ENCODE measurements at regions of chr3 and their contacts with region 1.

Region 1: DNA sequence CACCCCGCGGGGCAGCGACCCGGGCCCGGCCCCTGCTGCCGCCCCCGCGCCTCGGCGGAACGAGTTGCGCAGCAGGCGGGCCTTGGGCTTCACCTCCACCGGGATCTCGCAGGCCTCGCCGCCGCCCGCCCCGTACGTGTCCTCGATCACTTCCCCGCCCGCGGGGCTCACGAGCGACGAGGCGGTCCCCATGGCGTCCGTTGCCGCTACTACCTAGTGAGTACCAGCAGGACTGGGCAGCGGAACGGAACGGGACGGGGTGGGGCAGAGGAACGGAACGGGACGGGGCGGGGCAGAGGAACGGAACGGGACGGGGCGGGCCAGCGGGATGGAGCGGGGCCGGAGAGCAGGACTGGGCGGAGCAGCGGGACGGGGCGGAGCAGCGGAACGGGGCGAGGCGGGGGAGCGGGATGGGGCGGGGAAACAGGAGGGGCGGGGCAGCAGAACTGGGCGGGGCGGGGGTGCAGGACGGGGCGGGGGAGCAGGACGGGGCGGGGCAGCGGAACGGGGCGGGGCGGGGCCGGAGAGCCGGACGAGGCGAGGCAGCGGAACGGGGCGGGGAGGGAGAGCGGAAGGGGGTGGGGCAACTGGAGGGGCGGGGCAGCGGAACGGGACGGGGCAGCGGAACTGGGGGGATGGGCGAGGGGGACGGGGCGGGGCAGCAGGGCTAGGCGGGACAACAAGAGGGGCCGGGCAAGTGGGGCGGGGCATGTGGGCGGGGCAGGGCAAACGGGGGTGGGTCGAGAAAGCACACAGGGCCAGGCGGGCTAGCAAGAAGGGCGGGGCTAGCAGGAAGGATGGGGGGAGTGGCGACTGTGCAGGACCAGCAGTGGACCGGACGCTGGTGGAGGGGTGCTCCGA is at the start of gene NPHP3:
- DNase-seq: peak; percentile 100
- ATAC-seq: peak; percentile 86
- H3K4me3 Mint-ChIP-seq: peak within 1 kb of the TSS; percentile 90
- H3K27ac Mint-ChIP-seq: peak within 1 kb of the TSS; percentile 84
- H3K4me1 Mint-ChIP-seq: peaks cover 40% of the 10 kb centered on the region
- H3K27me3 Mint-ChIP-seq: no peaks in the 10 kb centered on the region
- total RNA-seq, gene NPHP3: 11.8 to 11.9 TPM

Region 2: GRCh38 chr3:130892759-130893375 is 1829.5 kb before region 1 on chr3:
- CTCF ChIA-PET with region 1: no interaction called
- POLR2A ChIA-PET with region 1: no interaction called
- intact Hi-C with region 1: loop called in 1 of 2 experiments (anchors 2 kb)
- DNase-seq: peak; percentile 79
- ATAC-seq: peak; percentile 56
- H3K4me3 Mint-ChIP-seq: peak overlapping the region; percentile 94
- H3K27ac Mint-ChIP-seq: peak overlapping the region; percentile 99
- H3K4me1 Mint-ChIP-seq: peaks cover 34% of the 10 kb centered on the region
- H3K27me3 Mint-ChIP-seq: no peaks in the 10 kb centered on the region

Region 3: DNA sequence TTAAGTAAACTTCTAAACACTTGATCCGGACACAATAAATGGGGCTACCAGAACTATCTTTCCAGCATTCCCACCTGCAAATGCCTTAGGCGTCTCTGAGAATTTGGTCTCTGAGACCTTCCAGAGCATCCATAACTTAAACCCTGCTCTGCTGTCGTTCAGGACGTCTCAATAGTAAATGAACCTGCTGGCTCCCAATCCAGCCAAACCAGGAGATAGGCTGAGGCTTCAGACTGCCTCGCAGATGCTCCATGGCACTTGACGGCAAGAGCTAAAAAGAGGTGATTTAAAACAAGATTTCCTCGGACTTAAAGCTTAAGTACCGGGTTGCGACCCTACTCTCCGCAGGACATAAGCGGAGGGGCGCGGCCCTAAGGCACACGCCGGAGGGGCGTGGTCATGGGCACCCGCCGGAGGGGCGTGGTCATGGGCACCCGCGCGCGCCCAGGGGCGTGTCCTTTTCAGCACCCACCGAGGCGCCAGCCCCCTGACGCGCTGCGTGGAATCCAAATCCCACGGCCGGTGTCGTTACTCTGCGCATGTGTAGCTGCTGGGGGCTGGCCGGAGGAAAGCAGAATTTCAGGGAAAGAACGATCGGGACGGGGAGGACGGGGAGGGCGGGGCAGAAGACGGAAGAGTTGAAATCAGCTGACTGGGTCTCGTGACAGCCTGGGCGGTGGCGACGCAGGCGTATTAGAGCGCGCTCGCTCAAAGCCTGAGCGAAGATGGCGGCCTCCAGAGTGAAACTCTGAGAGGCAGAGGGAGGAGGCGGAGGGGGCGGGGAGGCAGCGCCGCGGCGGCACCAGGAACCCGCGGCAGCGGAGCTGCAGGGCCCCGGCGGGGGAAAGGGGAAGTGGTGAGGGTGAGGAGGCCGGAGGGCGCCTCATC is 305.3 kb before region 1 on chr3 and contains the start of gene DNAJC13:
- CTCF ChIA-PET with region 1: interaction called, 3 read pairs
- POLR2A ChIA-PET with region 1: no interaction called
- intact Hi-C with region 1: loop called (anchors 1 to 5 kb)
- DNase-seq: peak; percentile 95
- ATAC-seq: peak; percentile 94
- H3K4me3 Mint-ChIP-seq: peak within 1 kb of the TSS; percentile 87
- H3K27ac Mint-ChIP-seq: peak within 1 kb of the TSS; percentile 94
- H3K4me1 Mint-ChIP-seq: peaks cover 37% of the 10 kb centered on the region
- H3K27me3 Mint-ChIP-seq: no peaks in the 10 kb centered on the region
- total RNA-seq, gene DNAJC13: 29.9 to 33.5 TPM

Region 4: GRCh38 chr3:132829101-132829500 is 106.7 kb after region 1 on chr3:
- CTCF ChIA-PET with region 1: no interaction called
- POLR2A ChIA-PET with region 1: no interaction called
- intact Hi-C with region 1: no loop called
- DNase-seq: no peak
- ATAC-seq: no peak
- H3K4me3 Mint-ChIP-seq: no peak overlapping the region
- H3K27ac Mint-ChIP-seq: no peak overlapping the region
- H3K4me1 Mint-ChIP-seq: no peaks in the 10 kb centered on the region
- H3K27me3 Mint-ChIP-seq: peaks cover 9% of the 10 kb centered on the region

Region 5: DNA sequence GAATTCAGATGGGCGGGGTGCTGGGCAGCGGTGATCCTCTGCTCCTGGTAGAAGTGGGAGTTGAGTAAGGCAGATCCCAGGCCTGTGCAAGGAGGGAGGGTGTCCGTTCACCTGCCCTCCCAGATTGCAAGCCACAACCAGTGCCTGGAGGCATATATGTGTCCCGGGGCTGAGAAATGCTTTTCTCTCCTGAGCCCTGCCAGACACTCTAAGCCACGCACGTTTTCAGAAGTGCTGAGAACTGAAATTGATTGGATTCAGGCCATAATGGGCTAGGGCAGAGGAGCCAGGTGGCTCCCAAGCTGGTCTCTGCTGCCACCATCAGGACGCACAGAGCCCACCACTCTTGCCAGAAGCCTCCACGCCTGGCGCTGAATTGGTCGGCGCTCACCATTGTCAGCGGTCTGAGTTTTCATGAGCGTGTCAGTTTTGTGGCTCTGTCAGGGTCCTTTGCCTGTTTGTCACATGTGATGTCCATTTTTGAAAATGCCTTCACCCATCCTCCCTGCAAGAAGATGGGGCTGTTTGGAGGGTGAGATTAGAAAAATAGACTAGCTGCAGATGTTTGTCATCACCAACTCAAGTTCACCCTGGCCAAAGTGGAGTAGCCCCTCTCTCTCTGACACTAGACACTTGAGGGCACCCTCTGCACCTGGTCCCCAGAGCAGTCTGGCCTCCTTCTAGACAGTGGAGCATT is 662.1 kb after region 1 on chr3:
- CTCF ChIA-PET with region 1: interaction called, 10 read pairs
- POLR2A ChIA-PET with region 1: no interaction called
- intact Hi-C with region 1: loop called (anchors 1 to 2 kb)
- DNase-seq: peak; percentile 71
- ATAC-seq: peak; percentile 83
- H3K4me3 Mint-ChIP-seq: no peak overlapping the region
- H3K27ac Mint-ChIP-seq: no peak overlapping the region
- H3K4me1 Mint-ChIP-seq: no peaks in the 10 kb centered on the region
- H3K27me3 Mint-ChIP-seq: peaks cover 3% of the 10 kb centered on the region

Region 6: DNA sequence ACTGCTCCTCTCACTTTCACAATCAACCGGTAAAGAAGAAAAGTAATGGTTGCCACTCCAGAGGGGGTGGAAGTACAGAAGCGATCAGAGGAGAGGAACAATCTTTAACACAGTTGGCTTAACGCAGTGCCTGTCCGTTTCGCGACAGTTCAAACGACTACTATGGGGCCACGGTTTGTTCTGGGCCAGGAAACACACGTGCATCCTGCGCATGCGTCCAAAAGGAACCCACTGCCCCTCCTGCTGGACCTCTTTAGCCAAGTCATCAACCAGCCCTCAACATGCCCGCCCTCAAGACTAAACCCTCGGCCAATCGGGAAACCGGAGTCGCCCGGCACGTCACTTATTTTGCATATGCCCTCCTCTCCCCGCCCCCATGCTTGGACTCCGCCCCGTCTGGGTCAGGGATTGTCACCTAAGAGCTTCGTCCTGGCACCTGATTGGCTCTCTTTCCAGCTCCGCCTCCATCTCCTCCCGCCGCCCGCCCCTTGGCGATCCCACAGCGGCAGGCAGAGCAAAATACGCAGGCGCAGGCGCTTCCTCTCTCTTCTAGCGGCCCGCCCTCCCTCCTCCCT is 850.7 kb after region 1 on chr3:
- CTCF ChIA-PET with region 1: interaction called, 4 read pairs
- POLR2A ChIA-PET with region 1: interaction called, 3 read pairs
- intact Hi-C with region 1: loop called (anchors 1 kb)
- DNase-seq: peak; percentile 100
- ATAC-seq: peak; percentile 81
- H3K4me3 Mint-ChIP-seq: peak overlapping the region; percentile 87
- H3K27ac Mint-ChIP-seq: peak overlapping the region; percentile 100
- H3K4me1 Mint-ChIP-seq: peaks cover 47% of the 10 kb centered on the region
- H3K27me3 Mint-ChIP-seq: no peaks in the 10 kb centered on the region

Region 7: GRCh38 chr3:133821767-133822638 is 1099.6 kb after region 1 on chr3:
- CTCF ChIA-PET with region 1: no interaction called
- POLR2A ChIA-PET with region 1: no interaction called
- intact Hi-C with region 1: loop called in 1 of 2 experiments (anchors 5 kb)
- DNase-seq: peak; percentile 21
- ATAC-seq: peak; percentile 39
- H3K4me3 Mint-ChIP-seq: no peak overlapping the region
- H3K27ac Mint-ChIP-seq: no peak overlapping the region
- H3K4me1 Mint-ChIP-seq: peaks cover 3% of the 10 kb centered on the region
- H3K27me3 Mint-ChIP-seq: no peaks in the 10 kb centered on the region

Region 8: DNA sequence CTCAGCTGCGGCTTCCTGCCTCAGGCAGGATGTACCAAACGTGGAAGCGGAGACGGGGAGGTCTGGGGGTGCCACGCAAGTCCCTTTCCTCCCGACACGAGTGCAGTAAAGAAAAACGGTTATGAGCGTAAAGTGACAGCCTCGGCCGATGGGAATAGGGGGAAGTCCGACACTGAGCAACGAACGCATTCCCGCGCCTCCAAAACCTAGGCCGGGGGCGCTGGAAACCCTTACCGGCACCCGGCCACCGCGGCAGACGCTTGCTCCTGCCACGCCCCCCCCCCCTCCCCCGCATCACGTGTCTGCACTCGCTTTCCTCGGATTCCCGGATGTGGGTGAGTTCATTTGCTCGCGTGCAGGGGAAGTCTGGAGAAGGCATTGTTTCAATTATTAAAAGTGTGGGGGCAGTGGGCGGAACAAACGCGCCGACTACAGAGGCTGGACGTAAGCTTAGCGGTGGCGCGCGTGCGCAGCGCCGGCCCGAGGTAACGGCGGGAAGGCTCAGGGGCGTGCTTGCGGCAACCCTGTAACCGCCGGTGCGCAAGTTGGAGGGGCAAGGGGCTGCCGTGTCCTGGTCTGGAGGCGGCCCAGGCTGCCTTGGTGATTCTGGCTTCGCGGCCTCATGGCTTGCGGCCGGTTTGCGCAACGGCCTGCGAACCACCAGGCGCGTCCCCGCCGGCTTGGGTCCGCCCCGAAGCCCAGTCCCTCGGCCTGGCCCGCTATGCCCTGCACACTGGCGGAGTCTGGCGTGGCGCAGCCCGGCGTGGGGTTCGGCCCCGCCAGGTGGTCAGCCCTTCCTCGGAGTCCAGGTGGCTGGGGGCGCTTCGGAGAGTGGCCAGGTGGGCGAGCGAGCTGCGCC is 1763.6 kb after region 1 on chr3 and contains the starts of genes ANAPC13 and CEP63:
- CTCF ChIA-PET with region 1: no interaction called
- POLR2A ChIA-PET with region 1: no interaction called
- intact Hi-C with region 1: loop called (anchors 1 to 5 kb)
- DNase-seq: peak; percentile 95
- ATAC-seq: peak; percentile 86
- H3K4me3 Mint-ChIP-seq: peak within 1 kb of the TSS; percentile 92
- H3K27ac Mint-ChIP-seq: peak within 1 kb of the TSS; percentile 98
- H3K4me1 Mint-ChIP-seq: peaks cover 47% of the 10 kb centered on the region
- H3K27me3 Mint-ChIP-seq: no peaks in the 10 kb centered on the region
- total RNA-seq, gene ANAPC13: 35.9 to 39.7 TPM
- total RNA-seq, gene CEP63: 21.3 to 25.9 TPM

Measured in activated CD4-positive, alpha-beta T cell treated with anti-CD3 and anti-CD28 coated beads for 36 hours (primary cell).